Head of caudate nucleus (tissue), 42 donors: ENCODE measurements at regions of chr15 and their contacts with region 1.

Region 1: DNA sequence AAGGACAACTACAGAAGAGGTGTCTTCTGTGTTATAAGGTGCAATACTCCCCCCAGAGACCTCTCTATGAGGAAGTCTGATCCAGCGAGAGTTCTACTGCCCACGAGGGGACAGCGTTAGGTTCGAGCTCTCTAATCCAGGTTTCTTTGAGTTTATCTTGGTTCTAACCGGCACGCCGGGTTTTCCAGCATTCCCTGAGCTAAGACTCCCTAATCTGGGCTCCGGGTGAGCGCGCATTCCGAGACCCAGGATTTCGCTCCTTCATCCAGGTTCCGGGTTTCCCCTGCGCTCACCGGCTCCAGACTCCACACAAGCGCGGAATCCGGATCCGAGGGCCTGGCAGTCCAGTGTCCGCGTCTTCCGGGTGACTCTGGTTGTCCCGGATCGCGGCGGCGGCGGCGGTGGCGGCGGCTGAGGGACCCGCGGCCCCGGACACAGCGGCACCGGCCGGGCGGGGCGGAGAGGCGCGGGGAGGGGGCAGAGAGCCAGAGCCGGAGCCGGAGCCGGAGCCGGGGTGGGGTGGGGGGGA is at the start of gene ZNF609:
- DNase-seq: peak; percentile 85 to 97 (median 93)

Region 2: DNA sequence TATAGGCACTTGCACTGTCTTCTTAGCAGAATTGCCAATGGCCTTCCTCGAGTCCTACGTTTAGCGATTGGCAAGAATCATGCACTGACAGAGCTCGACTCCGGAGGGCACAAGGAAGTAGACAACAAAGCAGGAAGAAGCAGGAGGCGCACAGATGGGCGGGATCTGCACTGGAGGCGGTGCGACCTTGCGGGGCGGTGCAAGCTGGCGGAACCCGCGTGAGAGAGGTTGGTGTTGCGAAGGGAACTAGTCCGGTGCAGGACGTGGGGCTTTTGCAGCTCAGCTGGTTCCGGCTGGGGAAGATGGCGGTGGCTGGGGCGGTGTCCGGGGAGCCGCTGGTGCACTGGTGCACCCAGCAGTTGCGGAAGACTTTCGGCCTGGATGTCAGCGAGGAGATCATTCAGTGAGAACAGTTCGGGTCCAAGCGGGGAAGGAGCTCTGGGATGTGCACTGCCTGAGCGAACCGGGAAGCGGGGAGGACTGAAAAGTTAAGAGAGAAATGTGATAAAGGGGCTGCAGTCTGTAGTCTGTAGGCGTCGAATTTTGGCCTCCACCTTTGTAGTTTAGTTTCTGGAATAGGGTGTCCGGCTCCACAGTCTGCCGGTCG is 72.6 kb before region 1 on chr15 and contains the start of gene TRIP4:
- intact Hi-C with region 1: loop called (anchors 5 kb)
- DNase-seq: peak; percentile 87 to 98 (median 95)

Region 3: DNA sequence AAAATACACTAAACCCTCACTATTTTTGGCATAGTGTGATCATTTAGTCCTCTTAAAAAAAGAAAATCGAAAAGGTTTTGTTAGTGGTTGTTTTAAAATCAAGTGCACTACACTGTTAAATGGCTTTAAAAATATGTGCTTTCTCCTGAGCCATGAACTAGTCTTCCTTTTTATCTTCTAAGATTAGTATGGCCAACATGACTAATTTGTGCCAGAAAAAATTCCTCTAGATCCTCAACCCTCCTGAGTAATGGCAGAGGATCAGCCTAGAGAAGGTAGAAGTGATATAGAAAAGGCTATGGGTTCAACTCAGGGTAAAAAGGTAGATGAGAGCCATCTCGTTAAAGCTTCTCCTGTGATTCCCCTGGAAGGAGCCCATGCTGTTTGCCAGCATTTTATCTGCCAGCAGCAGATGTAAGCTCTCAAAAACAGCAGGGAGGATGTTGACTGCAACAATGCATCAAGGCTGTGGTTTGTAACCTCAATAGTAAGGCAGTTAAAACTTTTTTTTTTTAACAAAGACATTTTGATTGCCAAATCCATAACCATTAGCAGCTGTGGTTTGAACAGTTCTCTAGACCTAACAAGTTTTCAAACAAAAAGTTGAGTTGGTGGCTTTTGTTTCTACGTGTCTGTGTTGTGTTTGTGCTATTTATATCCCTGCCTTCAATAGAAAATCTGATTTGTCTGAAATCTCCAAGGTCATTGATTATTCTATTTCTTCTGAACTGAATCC is 30.1 kb before region 1 on chr15:
- intact Hi-C with region 1: no loop called
- DNase-seq: no peak

Region 4: DNA sequence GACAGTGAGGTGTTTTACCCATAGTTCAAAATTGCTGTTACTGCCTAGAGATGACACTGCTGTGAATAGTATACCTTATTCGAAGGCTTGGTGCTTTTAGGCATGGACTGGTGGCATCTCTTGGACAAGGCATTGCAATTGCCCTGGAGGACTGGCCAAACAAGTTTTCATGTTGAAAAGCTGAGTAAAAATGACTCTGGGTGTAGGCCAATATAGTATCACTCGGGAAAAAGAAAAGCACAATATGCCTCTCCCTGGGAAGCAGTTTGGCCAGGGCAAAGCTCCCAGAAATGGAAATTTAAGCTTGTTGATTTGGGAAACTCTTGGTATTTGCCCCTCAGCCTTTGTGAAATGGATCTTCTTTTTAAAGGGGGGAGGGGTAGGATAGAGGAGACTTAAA is 54.9 kb after region 1 on chr15:
- intact Hi-C with region 1: loop called (anchors 10 kb)
- DNase-seq: no peak